ENCODE measurements at regions of chr17 and their contacts with region 1.

Region 1: DNA sequence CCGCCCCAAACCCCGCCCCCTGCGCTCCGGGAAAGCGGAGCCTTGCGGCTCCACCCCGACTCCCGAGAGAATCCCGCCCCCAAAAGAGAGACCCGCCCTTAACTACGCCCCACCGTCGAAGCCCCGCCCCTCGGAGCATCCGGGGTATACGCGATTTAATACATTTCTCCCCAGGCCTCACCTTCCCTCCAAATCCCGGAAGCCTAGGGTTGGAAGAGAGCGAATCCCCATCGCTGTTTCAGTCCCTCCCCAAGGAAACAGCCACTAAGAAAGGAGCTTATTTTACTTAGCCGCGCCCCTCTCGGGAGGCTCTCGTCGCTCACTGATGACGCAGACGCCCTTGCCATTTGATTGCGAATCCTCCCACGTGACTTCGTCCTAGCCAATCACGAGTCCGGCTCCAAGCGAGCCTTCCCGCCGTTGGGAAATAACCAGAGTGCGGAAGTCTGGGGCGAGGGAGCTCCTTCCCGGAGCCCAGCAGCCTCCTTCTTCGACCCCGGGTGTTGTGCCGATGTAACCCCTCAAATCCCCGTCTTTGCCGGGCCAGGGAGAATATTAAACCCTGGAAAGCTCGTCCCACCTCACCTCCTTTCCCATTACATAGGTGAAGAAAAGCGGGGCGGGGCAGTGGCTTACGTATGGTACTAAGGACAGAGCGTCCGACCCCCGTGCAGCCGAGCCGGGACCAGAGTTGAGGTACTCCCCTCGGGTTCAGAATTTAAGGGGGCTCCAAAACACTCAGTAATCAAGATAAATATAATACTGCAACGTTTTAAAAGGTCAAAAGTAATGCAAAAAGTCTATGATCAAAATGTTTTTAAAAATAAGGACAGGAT is 462 bp upstream of the FDXR start:
- DNase-seq: peak; percentile 91 to 100 (median 98)
- ATAC-seq: peak; percentile 97
- H3K4me3 ChIP-seq: peak overlapping the region; percentile 87
- H3K4me3 Mint-ChIP-seq: peak overlapping the region; percentile 74 to 96 (median 88)
- H3K27ac ChIP-seq: peak overlapping the region; percentile 91
- H3K27ac Mint-ChIP-seq: peak overlapping the region; percentile 94 to 99 (median 97)
- H3K4me1 ChIP-seq: peaks cover 11 to 14% of the 10 kb centered on the region in 2 donors
- H3K4me1 Mint-ChIP-seq: peaks cover 18 to 41% (median 22%) of the 10 kb centered on the region in 7 donors
- H3K27me3 ChIP-seq: no peaks in the 10 kb centered on the region
- H3K27me3 Mint-ChIP-seq: peaks cover 0 to 3% (median 0%) of the 10 kb centered on the region in 5 donors

Region 2: GRCh38 chr17:74203439-74204240 is 669.6 kb before region 1 on chr17 and contains the start of gene RPL38:
- CTCF ChIA-PET with region 1: no interaction called
- POLR2A ChIA-PET with region 1: no interaction called
- intact Hi-C with region 1: loop called in 1 of 2 experiments (anchors 2 kb)
- DNase-seq: peak; percentile 83 to 95 (median 94)
- ATAC-seq: peak; percentile 98
- H3K4me3 ChIP-seq: peak within 1 kb of the TSS; percentile 89
- H3K4me3 Mint-ChIP-seq: peak within 1 kb of the TSS; percentile 85 to 100 (median 98)
- H3K27ac ChIP-seq: peak within 1 kb of the TSS; percentile 86
- H3K27ac Mint-ChIP-seq: peak within 1 kb of the TSS; percentile 89 to 98 (median 96)
- H3K4me1 ChIP-seq: peaks cover 16 to 20% of the 10 kb centered on the region in 2 donors
- H3K4me1 Mint-ChIP-seq: peaks cover 24 to 49% (median 34%) of the 10 kb centered on the region in 7 donors
- H3K27me3 ChIP-seq: peaks cover 0 to 5% of the 10 kb centered on the region in 2 donors
- H3K27me3 Mint-ChIP-seq: peaks cover 8 to 16% (median 11%) of the 10 kb centered on the region in 5 donors
- total RNA-seq, gene RPL38: 1,097 to 2,553 (median 2,002) TPM

Region 3: DNA sequence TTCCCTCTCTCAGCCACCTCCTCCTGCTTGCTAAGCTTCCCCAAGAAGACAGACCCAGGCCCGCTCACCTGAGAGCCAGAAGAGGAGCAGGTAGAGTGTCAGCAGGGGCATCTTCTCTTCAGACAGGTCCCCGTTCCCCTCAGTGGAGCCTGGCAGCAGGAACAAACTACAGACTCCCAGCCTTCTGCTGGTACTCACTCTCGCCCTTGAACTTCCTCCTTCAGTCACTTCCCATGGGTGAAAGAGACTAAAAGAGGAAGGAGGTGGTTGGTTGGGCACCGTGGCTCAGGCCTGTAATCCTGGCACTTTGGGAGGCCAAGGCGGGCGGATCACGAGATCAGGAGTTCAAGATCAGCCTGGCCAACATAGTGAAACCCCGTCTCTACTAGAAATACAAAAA is 160.5 kb before region 1 on chr17 and contains the start of gene CD300LF:
- CTCF ChIA-PET with region 1: no interaction called
- POLR2A ChIA-PET with region 1: no interaction called
- intact Hi-C with region 1: no loop called
- DNase-seq: no peak
- ATAC-seq: peak; percentile 87
- H3K4me3 ChIP-seq: no peak within 1 kb of the TSS
- H3K4me3 Mint-ChIP-seq: peak within 1 kb of the TSS in 2 of 10 donors; percentile 4 to 69
- H3K27ac ChIP-seq: no peak within 1 kb of the TSS
- H3K27ac Mint-ChIP-seq: no peak within 1 kb of the TSS
- H3K4me1 ChIP-seq: peaks cover 0 to 5% of the 10 kb centered on the region in 2 donors
- H3K4me1 Mint-ChIP-seq: peaks cover 8 to 20% (median 9%) of the 10 kb centered on the region in 7 donors
- H3K27me3 ChIP-seq: no peaks in the 10 kb centered on the region
- H3K27me3 Mint-ChIP-seq: peaks cover 4 to 44% (median 13%) of the 10 kb centered on the region in 5 donors
- total RNA-seq, gene CD300LF: 0.46 to 41.0 (median 2.7) TPM in 4 of 5 experiments, not detected in the other

Region 4: DNA sequence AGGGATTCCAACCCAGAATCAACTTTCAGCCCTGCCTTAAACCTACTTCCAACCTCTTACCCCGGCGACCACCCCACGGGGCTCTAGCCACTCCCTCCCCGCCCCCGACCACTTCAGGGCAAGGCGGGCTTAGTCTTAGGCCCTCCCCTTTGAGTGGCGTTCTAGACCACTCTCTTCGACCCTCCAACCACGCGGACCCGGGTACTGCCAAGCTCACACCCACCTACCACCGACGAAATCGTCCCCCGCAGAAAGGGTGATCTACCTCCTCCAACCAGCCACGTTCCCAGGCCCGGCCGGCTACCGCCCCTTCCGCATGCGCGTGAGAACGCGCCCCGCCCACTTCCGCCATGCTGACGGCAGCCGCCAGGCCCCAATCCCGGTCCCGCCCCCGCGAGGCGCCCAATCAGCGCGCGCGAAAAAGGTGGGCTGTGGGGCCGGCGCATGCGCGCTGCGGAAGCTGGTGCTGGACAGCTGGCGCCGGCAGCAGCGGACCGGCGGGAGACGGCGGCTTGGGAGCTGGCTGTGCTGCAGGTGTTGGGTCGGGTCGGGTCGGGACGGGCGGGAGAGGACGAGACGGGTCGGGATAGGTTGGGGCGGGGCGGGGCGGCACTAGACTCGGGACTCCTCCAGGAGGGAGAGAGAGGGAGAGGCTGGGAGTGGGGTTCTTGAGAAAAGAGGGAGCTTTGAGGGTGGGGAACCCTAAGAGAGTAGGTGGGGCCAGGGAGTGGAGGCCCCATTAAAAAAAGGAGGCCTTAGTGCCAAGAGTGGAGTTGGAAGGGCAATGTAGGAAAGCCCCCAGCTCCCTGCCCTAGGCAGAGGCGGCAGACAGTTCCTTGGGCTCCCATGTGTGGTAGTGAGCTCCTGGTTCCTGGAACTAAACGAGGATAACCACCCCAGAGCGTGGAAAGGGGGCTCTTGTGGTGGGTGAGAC is 96.9 kb before region 1 on chr17 and contains the start of gene NAT9:
- CTCF ChIA-PET with region 1: no interaction called
- POLR2A ChIA-PET with region 1: interaction called, 5 read pairs
- intact Hi-C with region 1: loop called (anchors 1 kb)
- DNase-seq: peak; percentile 95 to 100 (median 98)
- ATAC-seq: peak; percentile 86
- H3K4me3 ChIP-seq: peak within 1 kb of the TSS; percentile 91
- H3K4me3 Mint-ChIP-seq: peak within 1 kb of the TSS; percentile 96 to 100 (median 98)
- H3K27ac ChIP-seq: peak within 1 kb of the TSS; percentile 78
- H3K27ac Mint-ChIP-seq: peak within 1 kb of the TSS; percentile 91 to 99 (median 96)
- H3K4me1 ChIP-seq: peaks cover 49 to 51% of the 10 kb centered on the region in 2 donors
- H3K4me1 Mint-ChIP-seq: peaks cover 32 to 76% (median 66%) of the 10 kb centered on the region in 7 donors
- H3K27me3 ChIP-seq: no peaks in the 10 kb centered on the region
- H3K27me3 Mint-ChIP-seq: no peaks in the 10 kb centered on the region
- total RNA-seq, gene NAT9: 41.4 to 78.8 (median 56.9) TPM

Region 5: GRCh38 chr17:74981979-74982662 is 108.9 kb after region 1 on chr17:
- CTCF ChIA-PET with region 1: no interaction called
- POLR2A ChIA-PET with region 1: no interaction called
- intact Hi-C with region 1: loop called in 1 of 2 experiments (anchors 1 kb)
- DNase-seq: peak; percentile 67 to 85 (median 83)
- ATAC-seq: peak; percentile 97
- H3K4me3 ChIP-seq: peak overlapping the region; percentile 77
- H3K4me3 Mint-ChIP-seq: peak overlapping the region; percentile 85 to 95 (median 92)
- H3K27ac ChIP-seq: peak overlapping the region; percentile 65
- H3K27ac Mint-ChIP-seq: peak overlapping the region; percentile 64 to 96 (median 87)
- H3K4me1 ChIP-seq: peaks cover 18 to 20% of the 10 kb centered on the region in 2 donors
- H3K4me1 Mint-ChIP-seq: peaks cover 3 to 27% (median 23%) of the 10 kb centered on the region in 7 donors
- H3K27me3 ChIP-seq: no peaks in the 10 kb centered on the region
- H3K27me3 Mint-ChIP-seq: peaks cover 0 to 57% (median 0%) of the 10 kb centered on the region in 5 donors

Region 6: GRCh38 chr17:75154195-75155106 is 281.2 kb after region 1 on chr17 and contains the start of gene JPT1:
- CTCF ChIA-PET with region 1: no interaction called
- POLR2A ChIA-PET with region 1: no interaction called
- intact Hi-C with region 1: loop called in 1 of 2 experiments (anchors 1 kb)
- DNase-seq: peak; percentile 82 to 98 (median 96)
- ATAC-seq: peak; percentile 100
- H3K4me3 ChIP-seq: peak within 1 kb of the TSS; percentile 84
- H3K4me3 Mint-ChIP-seq: peak within 1 kb of the TSS; percentile 88 to 98 (median 94)
- H3K27ac ChIP-seq: peak within 1 kb of the TSS; percentile 80
- H3K27ac Mint-ChIP-seq: peak within 1 kb of the TSS; percentile 78 to 96 (median 92)
- H3K4me1 ChIP-seq: peaks cover 0 to 18% of the 10 kb centered on the region in 2 donors
- H3K4me1 Mint-ChIP-seq: peaks cover 11 to 39% (median 36%) of the 10 kb centered on the region in 7 donors
- H3K27me3 ChIP-seq: no peaks in the 10 kb centered on the region
- H3K27me3 Mint-ChIP-seq: no peaks in the 10 kb centered on the region
- total RNA-seq, gene JPT1: 12.3 to 227 (median 29.3) TPM

Region 7: DNA sequence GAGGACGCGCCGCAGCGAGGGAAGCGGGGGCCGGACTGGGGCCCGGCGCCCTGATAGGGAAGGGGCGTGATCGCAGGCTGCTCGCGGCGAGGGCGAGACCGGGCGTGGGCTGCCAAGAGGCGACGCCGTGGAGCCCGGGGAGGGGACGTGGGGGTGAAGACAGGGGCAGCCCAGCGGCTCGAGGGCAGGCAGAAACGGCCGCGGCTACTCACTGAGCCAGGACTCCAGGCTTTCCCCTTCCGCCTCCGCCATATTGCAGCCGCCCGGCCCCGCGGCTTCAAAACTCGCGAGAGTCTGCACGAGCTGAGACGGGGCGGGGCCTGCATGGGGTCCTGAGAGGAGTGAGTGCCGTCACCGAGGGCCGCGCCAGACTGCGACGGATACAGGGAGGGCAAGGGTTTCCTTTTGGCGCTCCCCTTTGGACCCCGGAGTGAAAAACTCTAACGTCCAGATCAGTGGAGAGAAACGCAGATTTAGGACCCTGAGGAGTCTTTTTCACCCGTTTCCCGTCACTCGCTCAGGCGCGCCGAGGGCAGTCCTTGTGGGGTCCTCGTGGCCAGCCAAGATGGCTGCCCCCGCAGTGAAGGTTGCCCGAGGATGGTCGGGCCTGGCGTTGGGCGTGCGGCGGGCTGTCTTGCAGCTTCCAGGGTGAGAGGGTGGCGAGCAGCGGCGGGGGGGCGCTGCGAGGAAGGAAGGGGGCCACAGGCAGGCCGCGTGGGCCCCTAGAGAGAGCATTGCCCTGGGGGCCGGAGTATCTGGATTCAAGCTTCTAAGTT is 388.3 kb after region 1 on chr17 and contains the starts of genes GGA3 and MRPS7:
- CTCF ChIA-PET with region 1: interaction called, 3 read pairs
- POLR2A ChIA-PET with region 1: interaction called, 5 read pairs
- intact Hi-C with region 1: loop called in 1 of 2 experiments (anchors 1 kb)
- DNase-seq: peak; percentile 94 to 98 (median 96)
- ATAC-seq: peak; percentile 97
- H3K4me3 ChIP-seq: peak within 1 kb of the TSS; percentile 98
- H3K4me3 Mint-ChIP-seq: peak within 1 kb of the TSS; percentile 94 to 100 (median 97)
- H3K27ac ChIP-seq: peak within 1 kb of the TSS; percentile 99
- H3K27ac Mint-ChIP-seq: peak within 1 kb of the TSS; percentile 100
- H3K4me1 ChIP-seq: peaks cover 23% of the 10 kb centered on the region in 2 donors
- H3K4me1 Mint-ChIP-seq: peaks cover 40 to 65% (median 62%) of the 10 kb centered on the region in 7 donors
- H3K27me3 ChIP-seq: no peaks in the 10 kb centered on the region
- H3K27me3 Mint-ChIP-seq: no peaks in the 10 kb centered on the region
- total RNA-seq, gene GGA3: 79.6 to 128 (median 87.4) TPM
- total RNA-seq, gene MRPS7: 29.2 to 70.1 (median 34.4) TPM

Region 8: GRCh38 chr17:75524953-75525719 is 651.9 kb after region 1 on chr17 and contains the start of gene LLGL2:
- CTCF ChIA-PET with region 1: no interaction called
- POLR2A ChIA-PET with region 1: no interaction called
- intact Hi-C with region 1: loop called in 1 of 2 experiments (anchors 2 kb)
- DNase-seq: peak; percentile 82 to 91 (median 89)
- ATAC-seq: peak; percentile 98
- H3K4me3 ChIP-seq: peak within 1 kb of the TSS; percentile 75
- H3K4me3 Mint-ChIP-seq: peak within 1 kb of the TSS; percentile 76 to 86 (median 82)
- H3K27ac ChIP-seq: peak within 1 kb of the TSS; percentile 67
- H3K27ac Mint-ChIP-seq: peak within 1 kb of the TSS in 7 of 9 donors; percentile 45 to 74 (median 59)
- H3K4me1 ChIP-seq: peaks cover 6 to 7% of the 10 kb centered on the region in 2 donors
- H3K4me1 Mint-ChIP-seq: peaks cover 0 to 20% (median 16%) of the 10 kb centered on the region in 7 donors
- H3K27me3 ChIP-seq: no peaks in the 10 kb centered on the region
- H3K27me3 Mint-ChIP-seq: peaks cover 0 to 11% (median 0%) of the 10 kb centered on the region in 5 donors
- total RNA-seq, gene LLGL2: 22.4 to 55.7 (median 33.7) TPM